MCF 10A (cell line): ENCODE measurements at regions of chr4 and their contacts with region 1.

Region 1: DNA sequence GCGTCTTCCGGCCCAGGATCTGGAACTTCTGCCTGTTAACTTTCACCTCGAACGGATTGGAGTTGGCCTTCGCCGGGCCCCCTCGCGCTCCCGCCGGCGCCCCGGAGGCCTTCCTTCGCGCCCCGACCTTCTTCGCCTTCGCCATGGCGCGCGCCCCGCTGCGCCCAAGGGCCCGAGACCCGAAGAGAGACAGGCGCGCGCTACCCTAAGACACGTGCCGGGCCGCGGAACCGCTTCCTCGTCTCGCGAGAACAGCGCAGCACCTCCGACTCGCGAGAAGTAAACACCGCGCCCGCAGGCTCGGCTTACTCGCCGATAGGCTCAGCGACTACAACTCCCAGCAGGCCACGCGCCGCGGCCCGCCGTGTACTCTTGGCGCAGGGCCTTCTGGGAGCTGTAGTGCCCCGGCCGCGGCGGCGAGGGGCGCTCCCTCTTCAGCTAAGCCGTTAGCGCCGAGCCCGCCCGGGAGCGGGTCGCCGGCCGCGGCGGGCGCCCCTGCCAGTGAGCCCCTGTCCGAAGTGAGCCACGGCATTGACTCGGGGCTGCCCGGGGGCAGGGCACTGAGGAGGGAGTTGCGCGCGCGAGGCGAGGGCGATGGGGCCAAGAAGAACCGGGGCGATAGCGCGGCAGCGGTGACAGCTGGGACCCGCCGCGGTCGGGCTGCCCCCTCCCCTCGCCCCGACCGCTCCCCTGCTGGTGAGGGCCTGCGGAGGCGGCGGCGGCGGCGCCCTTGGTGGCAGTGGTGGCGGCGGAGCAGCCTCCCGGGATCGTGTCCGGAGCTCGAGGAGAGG is at the starts of genes GRK4 and NOP14:
- DNase-seq: peak; percentile 97
- H3K4me3 Mint-ChIP-seq: peak within 1 kb of the TSS; percentile 88
- H3K27ac Mint-ChIP-seq: peak within 1 kb of the TSS; percentile 94
- H3K4me1 Mint-ChIP-seq: peaks cover 16% of the 10 kb centered on the region
- H3K27me3 Mint-ChIP-seq: no peaks in the 10 kb centered on the region
- CTCF ChIP-seq: peak; percentile 36
- total RNA-seq, gene GRK4: 4.5 and 5.9 TPM in 2 replicates
- total RNA-seq, gene NOP14: 44.0 and 65.6 TPM in 2 replicates

Region 2: DNA sequence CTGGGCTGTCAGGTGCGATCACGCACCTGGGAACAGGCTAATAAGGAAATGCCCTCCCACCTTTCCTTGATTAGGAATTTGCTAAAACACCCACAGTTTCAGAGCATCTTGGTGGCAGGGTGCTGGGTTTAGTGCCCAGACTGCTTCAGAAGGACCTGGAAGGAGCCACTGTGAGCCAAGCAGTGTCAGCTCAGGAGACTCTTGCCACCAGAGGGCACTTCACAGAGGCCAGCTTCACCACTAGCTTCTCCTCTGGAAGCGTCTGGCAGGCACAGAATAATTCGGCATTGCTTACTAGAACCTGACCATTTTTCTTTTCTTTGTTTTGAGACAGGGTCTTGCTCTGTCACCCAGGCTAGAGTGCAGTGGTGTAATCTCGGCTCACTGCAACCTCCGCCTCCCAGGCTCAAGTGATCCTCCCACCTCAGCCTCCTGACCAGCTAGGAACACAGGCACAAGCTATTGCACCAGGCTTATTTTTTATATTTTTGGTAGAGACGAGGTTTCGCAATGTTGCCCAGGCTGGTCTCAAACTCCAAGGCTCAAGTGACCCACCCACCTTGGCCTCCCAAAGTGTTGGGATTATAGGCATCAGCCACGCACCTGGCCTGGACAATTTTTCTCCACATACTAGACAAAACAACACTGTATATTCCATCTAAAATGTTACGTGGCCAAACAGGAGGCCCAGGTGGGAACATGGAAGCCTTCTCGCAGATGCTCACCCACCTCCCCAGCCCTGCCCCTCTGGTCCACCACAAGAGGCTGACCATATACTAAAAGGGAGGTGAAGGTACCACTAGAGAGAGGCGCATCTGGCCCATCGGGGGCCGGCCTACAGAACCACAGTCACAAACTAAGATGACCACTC is 14.2 kb before region 1 on chr4:
- CTCF ChIA-PET with region 1: interaction called, 6 read pairs
- POLR2A ChIA-PET with region 1: interaction called, 36 read pairs
- intact Hi-C with region 1: no loop called
- DNase-seq: peak; percentile 42
- H3K4me3 Mint-ChIP-seq: no peak overlapping the region
- H3K27ac Mint-ChIP-seq: no peak overlapping the region
- H3K4me1 Mint-ChIP-seq: peaks cover 10% of the 10 kb centered on the region
- H3K27me3 Mint-ChIP-seq: no peaks in the 10 kb centered on the region
- CTCF ChIP-seq: peak; percentile 25

Region 3: GRCh38 chr4:2977211-2978088 is 14.1 kb after region 1 on chr4:
- CTCF ChIA-PET with region 1: interaction called, 25 read pairs
- POLR2A ChIA-PET with region 1: interaction called, 55 read pairs
- intact Hi-C with region 1: no loop called
- DNase-seq: peak; percentile 57
- H3K4me3 Mint-ChIP-seq: no peak overlapping the region
- H3K27ac Mint-ChIP-seq: peak overlapping the region; percentile 84
- H3K4me1 Mint-ChIP-seq: peaks cover 6% of the 10 kb centered on the region
- H3K27me3 Mint-ChIP-seq: peaks cover 3% of the 10 kb centered on the region
- CTCF ChIP-seq: no peak

Region 4: GRCh38 chr4:3009422-3009821 is 46.1 kb after region 1 on chr4:
- CTCF ChIA-PET with region 1: interaction called, 3 read pairs
- POLR2A ChIA-PET with region 1: interaction called, 48 read pairs
- intact Hi-C with region 1: no loop called
- DNase-seq: peak; percentile 78
- H3K4me3 Mint-ChIP-seq: peak overlapping the region; percentile 13
- H3K27ac Mint-ChIP-seq: peak overlapping the region; percentile 96
- H3K4me1 Mint-ChIP-seq: peaks cover 20% of the 10 kb centered on the region
- H3K27me3 Mint-ChIP-seq: no peaks in the 10 kb centered on the region
- CTCF ChIP-seq: peak; percentile 19

Region 5: DNA sequence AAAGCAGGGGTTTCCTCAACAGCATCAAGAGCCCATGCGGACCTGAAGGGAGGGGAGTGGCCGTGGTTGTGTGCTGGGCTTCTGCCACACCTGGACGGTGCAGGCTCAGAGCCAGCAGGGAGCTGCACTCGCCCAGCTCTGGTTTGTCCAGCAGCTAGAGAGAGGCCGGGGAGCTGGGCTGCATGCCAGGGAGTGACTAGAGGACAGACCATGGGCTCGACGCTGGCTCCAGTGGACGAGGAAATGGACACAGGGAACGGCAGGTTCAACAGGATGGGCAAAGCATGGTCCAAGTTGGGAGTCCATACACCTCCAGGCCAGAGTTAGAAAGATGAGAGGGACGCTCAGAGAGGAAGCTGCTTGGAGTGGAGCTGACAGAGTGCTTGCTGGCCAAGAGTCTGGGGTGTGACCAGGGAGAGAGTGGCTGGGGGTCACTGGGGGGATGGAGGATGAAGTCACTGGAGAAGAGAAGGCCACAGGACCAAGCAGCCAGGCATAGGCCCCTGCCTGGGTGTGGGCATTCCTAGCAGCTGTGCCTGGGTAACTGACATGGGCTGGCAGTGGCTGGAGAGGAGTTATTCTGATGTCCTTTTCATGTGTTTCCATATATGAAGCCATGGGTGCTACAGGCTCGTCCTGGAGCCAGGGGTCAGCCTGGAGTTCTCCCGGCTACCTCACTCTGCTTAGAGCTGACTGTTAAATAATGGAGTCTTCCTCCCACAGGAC is 68.2 kb after region 1 on chr4:
- CTCF ChIA-PET with region 1: interaction called, 9 read pairs
- POLR2A ChIA-PET with region 1: interaction called, 15 read pairs
- intact Hi-C with region 1: no loop called
- DNase-seq: peak; percentile 66
- H3K4me3 Mint-ChIP-seq: no peak overlapping the region
- H3K27ac Mint-ChIP-seq: no peak overlapping the region
- H3K4me1 Mint-ChIP-seq: peaks cover 13% of the 10 kb centered on the region
- H3K27me3 Mint-ChIP-seq: no peaks in the 10 kb centered on the region
- CTCF ChIP-seq: no peak

Region 6: GRCh38 chr4:3037957-3038461 is 74.6 kb after region 1 on chr4:
- CTCF ChIA-PET with region 1: interaction called, 9 read pairs
- POLR2A ChIA-PET with region 1: interaction called, 15 read pairs
- intact Hi-C with region 1: loop called (anchors 1 kb)
- DNase-seq: no peak
- H3K4me3 Mint-ChIP-seq: no peak overlapping the region
- H3K27ac Mint-ChIP-seq: no peak overlapping the region
- H3K4me1 Mint-ChIP-seq: peaks cover 10% of the 10 kb centered on the region
- H3K27me3 Mint-ChIP-seq: no peaks in the 10 kb centered on the region
- CTCF ChIP-seq: no peak

Region 7: GRCh38 chr4:3074078-3074795 is 110.9 kb after region 1 on chr4 and contains the starts of genes HTT and HTT-AS:
- CTCF ChIA-PET with region 1: no interaction called
- POLR2A ChIA-PET with region 1: interaction called, 14 read pairs
- intact Hi-C with region 1: no loop called
- DNase-seq: peak; percentile 91
- H3K4me3 Mint-ChIP-seq: peak within 1 kb of the TSS; percentile 86
- H3K27ac Mint-ChIP-seq: peak within 1 kb of the TSS; percentile 87
- H3K4me1 Mint-ChIP-seq: peaks cover 12% of the 10 kb centered on the region
- H3K27me3 Mint-ChIP-seq: no peaks in the 10 kb centered on the region
- CTCF ChIP-seq: no peak
- total RNA-seq, gene HTT: 47.4 and 54.4 TPM in 2 replicates
- total RNA-seq, gene HTT-AS: not detected in 2 replicates